Psoas muscle (tissue), 8 donors: ENCODE measurements at regions of chr14 and their contacts with region 1.

Region 1: DNA sequence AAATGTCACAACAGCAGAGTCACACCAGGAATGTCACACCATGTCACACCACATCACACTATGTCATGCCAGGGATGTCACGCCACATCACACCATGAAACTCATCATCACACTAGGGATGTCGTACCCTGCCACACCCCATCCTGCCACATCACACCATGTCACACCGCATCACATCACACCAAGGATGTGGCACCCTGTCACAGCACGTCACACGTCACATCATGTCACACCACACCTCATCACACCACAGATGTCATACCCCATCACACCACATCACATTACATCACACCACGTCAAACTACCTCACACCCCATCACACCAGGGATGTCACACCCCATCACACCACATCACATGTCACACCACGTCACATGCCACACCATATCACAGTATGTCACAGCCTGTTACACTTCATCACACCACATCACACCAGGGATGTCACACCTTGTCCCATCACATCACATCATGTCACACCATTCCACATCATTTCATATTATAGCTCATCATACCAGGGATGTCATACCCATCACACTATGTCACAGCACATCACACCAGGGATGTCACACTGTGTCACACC is 90.9 kb downstream of the TMEM121 start:
- DNase-seq: no peak
- ATAC-seq: peak in 1 of 4 donors; percentile 40
- H3K4me3 ChIP-seq: no peak overlapping the region
- H3K27ac ChIP-seq: no peak overlapping the region
- H3K4me1 ChIP-seq: no peaks in the 10 kb centered on the region
- H3K27me3 ChIP-seq: no peaks in the 10 kb centered on the region
- CTCF ChIP-seq: no peak

Region 2: GRCh38 chr14:105577314-105577861 is 39.9 kb before region 1 on chr14:
- intact Hi-C with region 1: no loop called
- DNase-seq: peak in 1 of 2 donors; percentile 29
- ATAC-seq: no peak
- H3K4me3 ChIP-seq: no peak overlapping the region
- H3K27ac ChIP-seq: no peak overlapping the region
- H3K4me1 ChIP-seq: no peaks in the 10 kb centered on the region
- H3K27me3 ChIP-seq: no peaks in the 10 kb centered on the region
- CTCF ChIP-seq: no peak

Region 3: GRCh38 chr14:105627711-105628110 is 10.4 kb after region 1 on chr14:
- intact Hi-C with region 1: loop called in 1 of 2 experiments (anchors 2 kb)
- DNase-seq: no peak
- ATAC-seq: no peak
- H3K4me3 ChIP-seq: no peak overlapping the region
- H3K27ac ChIP-seq: no peak overlapping the region
- H3K4me1 ChIP-seq: no peaks in the 10 kb centered on the region
- H3K27me3 ChIP-seq: peaks cover 0 to 3% (median 0%) of the 10 kb centered on the region in 3 donors
- CTCF ChIP-seq: no peak

Region 4: DNA sequence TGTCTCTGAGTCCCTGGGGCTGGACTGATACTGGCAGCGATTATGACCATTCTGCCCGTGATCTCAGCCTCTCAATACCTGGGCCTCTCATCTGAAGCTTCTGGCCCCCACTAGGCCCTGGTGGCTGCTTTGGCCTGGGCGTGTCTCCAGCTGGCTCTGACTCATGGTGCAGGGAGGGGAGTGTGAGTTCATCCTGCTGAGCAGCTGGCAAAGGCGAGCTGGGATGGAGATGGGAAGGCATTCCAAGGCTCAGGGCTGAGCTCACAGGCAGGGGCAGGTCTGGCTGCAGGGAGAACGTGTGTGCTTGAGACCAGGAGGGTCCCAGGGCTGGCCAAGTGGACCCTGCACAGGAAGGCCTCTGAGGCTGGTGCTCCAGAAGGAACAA is 130.9 kb after region 1 on chr14:
- intact Hi-C with region 1: no loop called
- DNase-seq: peak in 1 of 2 donors; percentile 53
- ATAC-seq: no peak
- H3K4me3 ChIP-seq: no peak overlapping the region
- H3K27ac ChIP-seq: no peak overlapping the region
- H3K4me1 ChIP-seq: no peaks in the 10 kb centered on the region
- H3K27me3 ChIP-seq: no peaks in the 10 kb centered on the region
- CTCF ChIP-seq: no peak

Region 5: GRCh38 chr14:105760691-105761346 is 143.5 kb after region 1 on chr14:
- intact Hi-C with region 1: loop called in 1 of 2 experiments (anchors 5 kb)
- DNase-seq: no peak
- ATAC-seq: no peak
- H3K4me3 ChIP-seq: no peak overlapping the region
- H3K27ac ChIP-seq: no peak overlapping the region
- H3K4me1 ChIP-seq: no peaks in the 10 kb centered on the region
- H3K27me3 ChIP-seq: no peaks in the 10 kb centered on the region
- CTCF ChIP-seq: no peak